Heart left ventricle (tissue), 16 donors: ENCODE measurements at regions of chr1 and their contacts with region 1.

Region 1: DNA sequence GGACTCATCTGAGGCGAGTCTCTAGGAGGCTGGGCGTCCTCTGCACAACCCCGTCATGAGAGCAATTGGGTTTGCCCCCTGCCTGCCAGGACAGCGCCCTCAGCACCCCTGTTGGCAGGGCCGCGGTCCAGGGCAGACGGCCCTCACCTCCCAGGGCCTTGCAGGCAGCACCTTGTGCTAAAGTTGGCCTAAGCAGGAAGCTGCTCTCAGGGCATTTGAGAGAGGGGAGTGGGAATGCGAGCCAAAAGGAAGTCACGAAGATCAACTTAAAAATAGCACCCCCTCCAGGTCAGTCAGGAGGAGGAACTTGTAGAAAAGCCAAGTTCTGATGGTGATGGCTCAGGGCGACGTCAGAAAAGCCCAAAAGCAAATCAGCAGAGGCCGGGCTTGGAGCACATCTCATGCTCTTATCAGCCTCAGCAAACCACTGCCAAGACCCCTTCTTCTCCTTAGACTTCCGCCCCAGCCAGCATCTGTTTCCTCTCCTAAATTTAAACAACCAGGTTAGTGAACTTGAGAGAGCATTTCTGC is 12.6 kb upstream of the ADORA3 start:
- DNase-seq: peak in 4 of 5 donors; percentile 78 to 89 (median 80)
- ATAC-seq: peak; percentile 62 to 84 (median 80)
- H3K4me3 ChIP-seq: peak overlapping the region in 11 of 12 donors; percentile 28 to 58 (median 49)
- H3K27ac ChIP-seq: peak overlapping the region; percentile 66 to 96 (median 90)
- H3K4me1 ChIP-seq: peaks cover 2 to 74% (median 35%) of the 10 kb centered on the region in 12 donors
- H3K27me3 ChIP-seq: no peaks in the 10 kb centered on the region
- CTCF ChIP-seq: peak; percentile 13 to 60 (median 38)
- POLR2A ChIP-seq: no peak

Region 2: DNA sequence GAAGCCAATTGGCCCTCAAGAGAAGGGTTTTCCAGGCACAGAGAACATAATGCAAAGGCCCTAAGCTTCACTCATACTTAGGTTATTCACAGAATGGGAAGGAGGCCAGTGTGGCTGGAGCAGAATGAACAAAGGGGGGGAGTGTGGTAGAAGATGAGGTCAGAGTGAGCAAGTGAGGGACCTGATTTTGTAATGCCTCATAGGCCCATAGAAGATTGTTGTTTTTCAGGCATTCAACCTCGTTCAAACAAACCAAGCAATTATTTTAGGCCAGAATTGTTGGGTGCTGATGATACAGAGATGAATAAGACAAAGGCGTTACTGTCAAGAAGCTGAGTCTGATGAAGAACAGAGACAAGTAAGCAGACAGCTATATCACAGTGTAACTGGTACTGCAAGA is 49.0 kb after region 1 on chr1:
- intact Hi-C with region 1: loop called in 1 of 10 experiments (anchors 5 kb)
- DNase-seq: no peak
- ATAC-seq: peak in 2 of 4 donors; percentile 51 to 68
- H3K4me3 ChIP-seq: no peak overlapping the region
- H3K27ac ChIP-seq: peak overlapping the region in 1 of 12 donors; percentile 64
- H3K4me1 ChIP-seq: peaks cover 0 to 8% (median 0%) of the 10 kb centered on the region in 12 donors
- H3K27me3 ChIP-seq: no peaks in the 10 kb centered on the region
- CTCF ChIP-seq: no peak
- POLR2A ChIP-seq: no peak

Region 3: DNA sequence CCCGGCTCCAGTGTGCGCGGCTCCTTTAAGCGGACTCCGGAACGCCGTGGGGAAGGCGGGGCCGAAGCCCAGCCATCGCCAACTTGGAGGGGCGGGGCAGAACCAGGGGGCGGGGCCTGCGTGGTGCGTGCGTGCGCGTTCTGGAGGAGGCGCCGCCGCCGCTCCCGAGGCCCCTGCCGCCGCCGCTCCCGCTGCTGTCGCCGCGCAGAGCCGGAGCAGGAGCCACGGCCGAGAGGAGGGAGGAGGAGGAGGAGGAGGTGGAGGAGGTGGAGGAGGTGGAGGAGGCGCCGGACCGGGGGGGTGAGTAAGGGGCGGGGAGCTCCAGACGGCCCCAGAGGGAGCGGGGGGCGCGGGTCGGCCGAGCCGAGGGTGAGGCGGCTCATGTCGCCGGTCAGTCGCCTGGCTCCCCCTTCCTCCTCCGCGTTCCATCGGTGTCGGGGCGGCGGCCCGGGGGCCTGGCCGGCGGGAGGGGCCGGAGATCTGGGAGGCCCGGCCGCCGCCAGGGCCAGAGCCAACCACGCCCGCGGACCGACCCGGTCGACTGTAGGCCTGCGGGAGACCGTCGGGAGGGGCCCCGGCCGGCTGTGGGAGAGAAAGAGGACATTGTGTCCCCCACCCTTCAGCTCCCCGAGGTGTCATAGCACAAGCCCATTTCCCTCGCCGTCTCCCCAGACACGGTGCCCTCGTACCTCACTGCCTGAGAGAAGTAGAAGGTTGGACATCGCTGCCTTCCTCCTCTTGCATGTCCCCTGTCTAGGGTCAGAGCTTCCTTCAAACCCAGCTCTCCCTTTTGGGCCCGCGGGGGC is 103.8 kb after region 1 on chr1 and contains the start of gene RAP1A:
- intact Hi-C with region 1: loop called in 3 of 10 experiments (anchors 1 to 10 kb)
- DNase-seq: peak; percentile 96 to 98 (median 97)
- ATAC-seq: peak; percentile 96 to 98 (median 97)
- H3K4me3 ChIP-seq: peak within 1 kb of the TSS; percentile 61 to 95 (median 82)
- H3K27ac ChIP-seq: peak within 1 kb of the TSS; percentile 94 to 98 (median 98)
- H3K4me1 ChIP-seq: peaks cover 0 to 83% (median 34%) of the 10 kb centered on the region in 12 donors
- H3K27me3 ChIP-seq: no peaks in the 10 kb centered on the region
- CTCF ChIP-seq: no peak
- POLR2A ChIP-seq: peak in 1 of 2 donors; percentile 79
- total RNA-seq, gene RAP1A: 52.6 to 134 (median 99.1) TPM